AG04449 (cell line): ENCODE measurements at regions of chr19 and their contacts with region 1.

Region 1: GRCh38 chr19:41959056-41960053 is at the start of gene RABAC1:
- DNase-seq: peak; percentile 47
- H3K4me3 ChIP-seq: peak within 1 kb of the TSS; percentile 98
- CTCF ChIP-seq: peak; percentile 11

Region 2: GRCh38 chr19:41872775-41873647 is 86.3 kb before region 1 on chr19:
- CTCF ChIA-PET with region 1: interaction called, 18 read pairs
- POLR2A ChIA-PET with region 1: interaction called, 5 read pairs
- DNase-seq: no peak
- H3K4me3 ChIP-seq: no peak overlapping the region
- CTCF ChIP-seq: peak; percentile 84

Region 3: DNA sequence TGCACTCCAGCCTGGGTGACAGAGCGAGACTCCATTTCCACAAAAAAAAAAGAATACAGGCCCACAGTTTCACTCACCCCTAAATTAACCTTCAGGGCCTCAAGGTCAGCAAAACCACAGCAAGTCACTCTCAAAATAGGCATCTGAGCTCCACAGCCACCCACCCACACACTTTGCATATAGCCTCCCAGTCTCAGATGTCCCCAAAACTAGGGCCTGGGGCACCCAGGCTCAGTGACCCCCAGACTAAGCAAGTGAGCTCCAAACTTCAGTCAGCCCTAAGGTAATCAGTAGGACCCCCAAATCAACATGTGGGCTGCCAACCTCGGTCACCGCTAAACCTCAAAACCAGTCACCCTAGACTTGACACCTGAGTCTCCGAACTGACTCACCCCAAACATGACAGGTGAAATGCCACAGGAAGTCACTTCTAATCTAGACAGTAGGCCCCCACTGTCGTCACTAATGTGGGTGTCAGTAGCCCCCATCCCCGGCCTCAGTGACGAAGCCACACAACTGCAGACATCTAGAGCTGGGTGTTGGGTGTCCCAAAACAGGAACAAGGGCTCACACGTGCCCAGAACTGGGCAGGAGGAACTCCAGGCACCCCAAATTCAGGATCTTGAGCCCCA is 14.1 kb before region 1 on chr19:
- CTCF ChIA-PET with region 1: interaction called, 30 read pairs
- POLR2A ChIA-PET with region 1: no interaction called
- DNase-seq: no peak
- H3K4me3 ChIP-seq: no peak overlapping the region
- CTCF ChIP-seq: no peak